ENCODE measurements at regions of chr10 and their contacts with region 1.

Region 1: GRCh38 chr10:86803156-86803555 is 46.7 kb downstream of the BMPR1A start:
- DNase-seq: no peak
- H3K4me3 ChIP-seq: no peak overlapping the region
- H3K27ac ChIP-seq: no peak overlapping the region
- H3K4me1 ChIP-seq: no peaks in the 10 kb centered on the region
- H3K27me3 ChIP-seq: no peaks in the 10 kb centered on the region
- CTCF ChIP-seq: no peak
- POLR2A ChIP-seq: no peak

Region 2: DNA sequence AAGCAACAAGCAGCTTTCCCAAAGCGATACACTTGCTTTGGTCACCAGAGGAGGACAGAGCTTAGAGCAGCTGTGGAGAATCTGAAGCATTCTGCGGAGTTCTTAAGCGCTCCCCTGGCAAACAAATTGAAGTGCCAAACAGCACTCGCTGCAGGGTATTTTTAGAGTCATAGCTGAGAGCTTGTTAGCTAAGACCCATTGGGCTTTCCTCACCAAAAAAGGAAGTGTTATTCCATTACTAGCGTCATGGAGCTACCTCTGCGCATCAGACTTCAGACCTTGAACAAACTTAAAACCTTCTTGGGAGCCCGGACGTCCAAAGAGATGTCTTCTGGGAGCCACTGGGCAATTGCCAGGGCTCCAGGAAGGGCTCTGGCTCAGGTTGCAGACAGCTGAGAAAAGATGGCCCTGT is 69.9 kb before region 1 on chr10:
- intact Hi-C with region 1: no loop called
- DNase-seq: no peak
- H3K4me3 ChIP-seq: no peak overlapping the region
- H3K27ac ChIP-seq: no peak overlapping the region
- H3K4me1 ChIP-seq: no peaks in the 10 kb centered on the region
- H3K27me3 ChIP-seq: no peaks in the 10 kb centered on the region
- CTCF ChIP-seq: no peak
- POLR2A ChIP-seq: no peak

Region 3: GRCh38 chr10:86773498-86773897 is 29.7 kb before region 1 on chr10:
- intact Hi-C with region 1: loop called (anchors 2 kb)
- DNase-seq: no peak
- H3K4me3 ChIP-seq: no peak overlapping the region
- H3K27ac ChIP-seq: no peak overlapping the region
- H3K4me1 ChIP-seq: peaks cover 5 to 9% of the 10 kb centered on the region in 2 donors
- H3K27me3 ChIP-seq: no peaks in the 10 kb centered on the region
- CTCF ChIP-seq: no peak
- POLR2A ChIP-seq: no peak

Measured in breast epithelium (tissue), 4 donors.